GM10248 (cell line): ENCODE measurements at regions of chr17 and their contacts with region 1.

Region 1: DNA sequence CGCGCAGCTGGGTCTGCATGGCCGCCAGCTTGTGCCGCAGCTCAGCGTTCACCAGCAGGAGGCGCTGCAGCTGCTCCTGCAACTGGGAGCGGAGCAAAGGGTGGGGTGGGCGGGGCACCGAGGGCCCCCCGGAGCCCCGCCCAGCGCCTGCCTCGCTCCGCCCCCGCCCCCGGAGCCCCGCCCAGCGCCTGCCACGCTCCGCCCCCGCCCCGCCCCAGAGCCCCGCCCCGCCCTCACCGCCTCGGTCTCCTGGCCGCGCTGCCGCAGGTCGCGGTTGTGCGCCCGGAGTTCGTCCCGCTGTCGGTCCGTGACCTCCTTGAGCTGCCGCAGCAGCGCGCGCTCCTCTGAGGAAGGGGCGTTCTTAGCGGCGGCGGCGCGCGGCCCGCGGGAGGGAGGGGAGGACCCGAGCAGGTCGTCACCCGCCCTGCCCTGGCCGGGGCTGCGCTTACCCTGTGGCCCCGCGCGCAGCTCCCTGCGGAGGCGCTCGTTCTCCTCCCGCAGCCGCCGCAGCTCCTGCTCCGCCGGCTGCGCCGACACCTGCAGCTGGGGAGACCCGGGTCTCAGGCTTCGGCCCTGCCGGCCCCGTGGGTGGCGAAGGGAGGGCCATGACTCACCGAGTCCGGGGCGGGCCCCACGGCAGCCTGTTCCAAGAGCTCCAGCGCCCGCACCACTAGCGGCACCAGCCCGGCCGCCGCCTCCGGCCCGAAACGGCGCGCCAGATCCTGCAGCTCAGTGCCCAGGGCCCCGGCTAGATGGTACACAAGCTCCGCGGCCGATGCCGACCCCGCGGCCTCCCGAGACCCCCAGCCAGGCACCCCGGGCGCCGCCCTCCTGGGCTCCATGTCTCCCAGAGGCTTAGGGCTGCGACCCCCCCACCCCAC is 463 bp downstream of the RILP start:
- DNase-seq: peak; percentile 98
- CTCF ChIP-seq: peak; percentile 100

Region 2: GRCh38 chr17:1484676-1485421 is 164.4 kb before region 1 on chr17:
- CTCF ChIA-PET with region 1: no interaction called
- POLR2A ChIA-PET with region 1: no interaction called
- DNase-seq: peak; percentile 78
- CTCF ChIP-seq: no peak

Region 3: DNA sequence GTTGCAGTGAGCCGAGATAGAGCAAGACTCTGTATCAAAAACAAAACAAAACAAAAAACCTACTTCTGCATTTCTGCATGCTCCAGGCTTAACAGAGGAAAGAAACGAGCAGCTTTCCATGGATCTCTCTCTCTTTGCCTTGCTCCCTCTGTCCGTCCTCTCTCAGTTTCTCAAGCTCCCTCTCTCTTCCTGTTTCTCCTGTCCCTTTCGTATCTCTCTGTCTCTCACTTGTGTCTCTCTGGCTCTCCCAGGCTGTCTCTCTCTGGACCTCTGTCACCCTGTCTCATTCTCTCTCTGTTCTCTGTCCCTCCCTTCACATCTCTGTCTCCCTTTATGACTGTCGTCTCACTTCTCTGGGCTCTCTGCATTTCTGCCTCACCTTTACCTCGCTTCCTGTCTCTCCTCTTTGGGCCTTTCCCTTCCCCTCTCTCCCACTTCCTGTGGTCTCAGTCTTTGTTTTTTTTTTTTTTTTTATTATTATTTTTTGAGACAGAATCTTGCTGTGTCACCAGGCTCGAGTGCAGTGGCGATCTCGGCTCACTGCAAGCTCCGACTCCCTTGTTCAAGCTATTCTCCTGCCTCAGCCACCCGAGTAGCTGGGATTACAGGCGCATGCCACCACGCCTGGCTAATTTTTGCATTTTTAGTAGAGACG is 82.5 kb before region 1 on chr17:
- CTCF ChIA-PET with region 1: interaction called, 10 read pairs
- POLR2A ChIA-PET with region 1: no interaction called
- DNase-seq: peak; percentile 74
- CTCF ChIP-seq: no peak

Region 4: DNA sequence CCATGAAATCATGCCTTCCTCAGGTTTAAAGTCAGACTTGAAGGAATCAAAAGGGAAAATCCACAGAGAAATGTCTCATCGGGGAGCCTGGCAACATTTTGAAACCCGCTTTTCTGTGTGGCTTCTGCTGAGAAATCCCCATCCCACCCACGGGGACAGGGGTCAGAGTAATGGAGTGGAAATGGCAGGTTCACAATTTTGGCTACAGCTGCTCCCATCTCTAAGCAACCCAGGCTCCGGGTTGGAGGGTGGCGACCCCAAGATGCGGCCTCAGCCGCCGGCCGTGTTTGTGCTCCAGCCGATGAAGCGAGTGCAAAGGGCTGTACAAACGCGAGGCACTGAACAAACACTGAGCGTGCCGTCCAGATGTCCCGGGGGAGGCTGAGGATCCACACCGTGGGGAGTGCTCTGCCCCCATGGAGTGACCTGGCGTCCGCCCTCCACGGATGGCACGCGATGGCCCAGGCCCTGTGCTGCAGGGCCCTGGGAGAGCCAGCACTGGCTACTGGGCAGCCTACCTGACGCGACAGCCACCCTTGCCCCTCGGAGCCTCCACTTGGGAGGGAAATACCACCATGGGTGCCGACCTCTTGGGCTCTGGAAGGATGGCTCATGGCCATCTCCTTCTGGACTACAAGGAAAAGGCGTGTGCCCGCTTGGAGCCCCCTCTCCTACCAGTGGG is 42.7 kb before region 1 on chr17:
- CTCF ChIA-PET with region 1: interaction called, 14 read pairs
- POLR2A ChIA-PET with region 1: no interaction called
- DNase-seq: peak; percentile 30
- CTCF ChIP-seq: no peak